CD8-positive, alpha-beta T cell (primary cell): ENCODE measurements at regions of chr2 and their contacts with region 1.

Region 1: DNA sequence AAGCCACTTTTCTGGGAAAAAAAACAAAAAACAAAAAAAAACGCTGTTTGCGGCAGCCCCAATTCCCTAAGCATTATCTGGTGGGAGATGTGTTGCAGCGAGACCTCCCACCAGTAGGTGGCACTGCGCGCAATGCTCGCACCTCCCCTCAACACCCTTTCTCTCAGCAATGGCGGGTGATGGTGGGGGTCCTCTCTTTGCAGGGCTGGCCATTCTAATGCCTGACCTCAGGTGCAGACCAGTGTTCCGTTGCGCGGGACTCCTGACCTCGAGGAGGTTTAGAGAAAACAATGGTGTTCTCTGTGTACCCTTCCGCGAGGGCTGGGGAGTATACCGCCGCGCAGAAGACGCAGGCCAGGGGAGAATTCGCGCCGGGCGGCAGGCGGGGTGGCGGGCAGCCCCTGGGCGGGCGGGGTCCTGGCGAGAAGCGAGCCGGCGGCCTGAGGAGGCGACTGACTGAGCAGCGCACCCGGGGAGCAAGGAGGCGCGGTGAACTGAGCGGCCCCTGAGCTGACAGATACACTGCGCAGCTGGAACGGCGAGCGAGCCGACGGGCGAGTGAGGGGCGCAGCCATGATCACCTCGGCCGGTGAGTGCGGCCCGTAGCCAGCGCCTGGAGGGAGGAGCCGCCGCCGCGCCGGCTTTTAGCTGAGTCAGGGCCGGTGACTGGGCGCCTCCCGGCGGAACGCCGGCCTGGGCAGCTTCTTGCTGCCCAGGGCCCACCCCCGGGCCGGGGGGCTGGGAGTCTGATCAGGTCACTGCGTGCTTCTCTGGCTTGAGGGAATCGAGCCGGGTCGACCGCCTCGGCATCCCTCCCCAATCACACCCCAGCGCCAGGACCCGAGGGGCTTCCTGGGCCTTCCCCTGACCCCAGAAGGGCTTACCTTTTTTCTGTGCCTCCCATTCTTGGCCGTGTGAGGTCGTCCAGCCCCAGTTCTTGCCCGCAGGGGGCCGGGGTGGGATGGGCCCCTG is at the start of gene PSMD1:
- DNase-seq: peak; percentile 90 to 97 (median 93)
- ATAC-seq: peak; percentile 85
- H3K4me3 ChIP-seq: peak within 1 kb of the TSS; percentile 83 to 87
- H3K4me3 Mint-ChIP-seq: peak within 1 kb of the TSS; percentile 99
- H3K27ac ChIP-seq: peak within 1 kb of the TSS; percentile 70 to 84
- H3K27ac Mint-ChIP-seq: peak within 1 kb of the TSS; percentile 100
- H3K4me1 ChIP-seq: peaks cover 29% of the 10 kb centered on the region
- H3K4me1 Mint-ChIP-seq: peaks cover 55% of the 10 kb centered on the region
- H3K27me3 ChIP-seq: no peaks in the 10 kb centered on the region
- H3K27me3 Mint-ChIP-seq: peaks cover 8% of the 10 kb centered on the region
- CTCF ChIP-seq: peak; percentile 93
- total RNA-seq, gene PSMD1: 31.0 to 33.9 TPM

Region 2: GRCh38 chr2:229927817-229928321 is 1128.9 kb before region 1 on chr2:
- CTCF ChIA-PET with region 1: no interaction called
- POLR2A ChIA-PET with region 1: no interaction called
- intact Hi-C with region 1: loop called (anchors 2 to 5 kb)
- DNase-seq: peak in 1 of 9 experiments; percentile 36
- ATAC-seq: peak; percentile 38
- H3K4me3 ChIP-seq: no peak overlapping the region
- H3K4me3 Mint-ChIP-seq: no peak overlapping the region
- H3K27ac ChIP-seq: no peak overlapping the region
- H3K27ac Mint-ChIP-seq: no peak overlapping the region
- H3K4me1 ChIP-seq: no peaks in the 10 kb centered on the region
- H3K4me1 Mint-ChIP-seq: peaks cover 27% of the 10 kb centered on the region
- H3K27me3 ChIP-seq: no peaks in the 10 kb centered on the region
- H3K27me3 Mint-ChIP-seq: no peaks in the 10 kb centered on the region
- CTCF ChIP-seq: no peak

Region 3: DNA sequence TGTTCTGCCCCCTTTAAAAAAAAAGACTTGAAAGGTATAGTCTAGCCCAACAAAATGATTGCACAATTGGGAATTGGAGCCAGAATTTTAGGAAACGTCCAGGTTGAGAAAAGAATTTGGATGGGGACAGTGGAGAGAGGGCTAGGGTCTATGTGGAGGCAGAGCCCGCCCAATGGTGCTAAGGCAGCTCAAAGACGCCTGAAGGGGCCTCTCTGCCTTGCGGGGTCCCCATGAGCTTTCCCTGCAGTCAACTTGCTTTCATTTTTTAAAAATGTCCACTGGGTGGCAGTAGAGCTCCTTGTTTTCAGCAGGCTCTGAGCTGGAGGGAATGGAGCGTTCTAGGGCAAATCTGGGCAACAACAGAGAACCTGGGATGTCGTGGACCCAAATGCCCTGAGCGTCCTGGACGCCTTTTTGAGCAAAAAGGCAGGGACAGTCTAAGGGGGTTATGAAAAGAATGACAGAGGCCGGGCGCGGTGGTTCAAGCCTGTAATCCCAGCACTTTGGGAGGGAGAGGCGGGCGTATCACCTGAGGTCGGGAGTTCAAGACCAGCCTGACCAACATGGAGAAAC is 232.2 kb before region 1 on chr2:
- CTCF ChIA-PET with region 1: interaction called, 9 read pairs
- POLR2A ChIA-PET with region 1: no interaction called
- intact Hi-C with region 1: loop called (anchors 1 kb)
- DNase-seq: peak; percentile 17 to 88 (median 55)
- ATAC-seq: peak; percentile 90
- H3K4me3 ChIP-seq: no peak overlapping the region
- H3K4me3 Mint-ChIP-seq: peak overlapping the region; percentile 64
- H3K27ac ChIP-seq: no peak overlapping the region
- H3K27ac Mint-ChIP-seq: no peak overlapping the region
- H3K4me1 ChIP-seq: peaks cover 5% of the 10 kb centered on the region
- H3K4me1 Mint-ChIP-seq: peaks cover 7% of the 10 kb centered on the region
- H3K27me3 ChIP-seq: peaks cover 11 to 12% of the 10 kb centered on the region in 2 experiments
- H3K27me3 Mint-ChIP-seq: peaks cover 29% of the 10 kb centered on the region
- CTCF ChIP-seq: peak; percentile 83

Region 4: DNA sequence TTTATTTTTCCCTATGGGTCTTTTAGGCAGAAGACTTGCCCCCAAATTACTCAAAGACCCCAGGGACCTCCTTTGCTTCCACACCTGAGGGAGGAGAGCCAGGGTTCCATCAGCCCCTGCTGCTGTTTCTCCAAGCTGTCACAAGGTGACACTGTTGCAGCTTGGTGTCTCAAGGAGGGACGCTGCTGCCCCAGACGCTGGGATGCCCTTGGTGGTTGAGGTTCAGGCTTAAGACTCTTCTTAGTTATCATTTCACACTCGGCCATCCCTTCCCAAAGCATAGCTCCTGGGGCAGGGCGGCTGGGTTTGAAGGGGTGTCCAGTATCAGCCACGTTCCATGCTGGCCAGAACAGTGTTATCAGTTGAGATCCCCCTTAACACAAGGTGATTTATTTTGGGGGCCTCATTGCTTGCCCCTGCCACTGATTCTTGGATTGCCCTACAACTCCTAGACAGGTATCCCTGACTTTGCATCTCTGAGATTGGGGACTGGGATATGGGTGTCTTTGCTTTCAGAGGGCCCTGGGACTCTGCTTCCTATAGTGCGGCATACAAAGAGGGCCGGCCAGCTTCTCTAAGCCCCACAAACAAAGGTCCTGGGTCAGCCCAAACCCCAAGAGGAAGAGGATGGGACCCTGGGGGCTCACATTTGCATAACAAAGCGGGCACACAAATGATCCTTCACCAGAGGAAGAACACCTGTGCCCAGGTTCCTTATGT is 154.4 kb before region 1 on chr2:
- CTCF ChIA-PET with region 1: interaction called, 4 read pairs
- POLR2A ChIA-PET with region 1: no interaction called
- intact Hi-C with region 1: loop called (anchors 1 to 2 kb)
- DNase-seq: peak in 7 of 9 experiments; percentile 40 to 78 (median 60)
- ATAC-seq: no peak
- H3K4me3 ChIP-seq: no peak overlapping the region
- H3K4me3 Mint-ChIP-seq: no peak overlapping the region
- H3K27ac ChIP-seq: no peak overlapping the region
- H3K27ac Mint-ChIP-seq: no peak overlapping the region
- H3K4me1 ChIP-seq: peaks cover 24% of the 10 kb centered on the region
- H3K4me1 Mint-ChIP-seq: peaks cover 34% of the 10 kb centered on the region
- H3K27me3 ChIP-seq: no peaks in the 10 kb centered on the region
- H3K27me3 Mint-ChIP-seq: no peaks in the 10 kb centered on the region
- CTCF ChIP-seq: peak; percentile 84

Region 5: GRCh38 chr2:231463698-231464575 is 407.2 kb after region 1 on chr2 and contains the start of gene NCL:
- CTCF ChIA-PET with region 1: interaction called, 4 read pairs
- POLR2A ChIA-PET with region 1: no interaction called
- intact Hi-C with region 1: loop called in 1 of 2 experiments (anchors 1 kb)
- DNase-seq: peak; percentile 71 to 94 (median 82)
- ATAC-seq: peak; percentile 62
- H3K4me3 ChIP-seq: peak within 1 kb of the TSS; percentile 97
- H3K4me3 Mint-ChIP-seq: peak within 1 kb of the TSS; percentile 96
- H3K27ac ChIP-seq: peak within 1 kb of the TSS; percentile 97 to 98
- H3K27ac Mint-ChIP-seq: peak within 1 kb of the TSS; percentile 100
- H3K4me1 ChIP-seq: peaks cover 36% of the 10 kb centered on the region
- H3K4me1 Mint-ChIP-seq: peaks cover 52% of the 10 kb centered on the region
- H3K27me3 ChIP-seq: no peaks in the 10 kb centered on the region
- H3K27me3 Mint-ChIP-seq: no peaks in the 10 kb centered on the region
- CTCF ChIP-seq: no peak
- total RNA-seq, gene NCL: 390 to 394 TPM

Region 6: GRCh38 chr2:231786177-231786916 is 729.6 kb after region 1 on chr2 and contains the start of gene COPS7B:
- CTCF ChIA-PET with region 1: no interaction called
- POLR2A ChIA-PET with region 1: no interaction called
- intact Hi-C with region 1: loop called in 1 of 2 experiments (anchors 2 kb)
- DNase-seq: peak; percentile 57 to 88 (median 81)
- ATAC-seq: peak; percentile 64
- H3K4me3 ChIP-seq: peak within 1 kb of the TSS; percentile 75 to 95
- H3K4me3 Mint-ChIP-seq: peak within 1 kb of the TSS; percentile 93
- H3K27ac ChIP-seq: peak within 1 kb of the TSS; percentile 59 to 73
- H3K27ac Mint-ChIP-seq: peak within 1 kb of the TSS; percentile 84
- H3K4me1 ChIP-seq: peaks cover 48% of the 10 kb centered on the region
- H3K4me1 Mint-ChIP-seq: peaks cover 76% of the 10 kb centered on the region
- H3K27me3 ChIP-seq: no peaks in the 10 kb centered on the region
- H3K27me3 Mint-ChIP-seq: no peaks in the 10 kb centered on the region
- CTCF ChIP-seq: peak; percentile 66
- total RNA-seq, gene COPS7B: 35.0 to 36.8 TPM

Region 7: DNA sequence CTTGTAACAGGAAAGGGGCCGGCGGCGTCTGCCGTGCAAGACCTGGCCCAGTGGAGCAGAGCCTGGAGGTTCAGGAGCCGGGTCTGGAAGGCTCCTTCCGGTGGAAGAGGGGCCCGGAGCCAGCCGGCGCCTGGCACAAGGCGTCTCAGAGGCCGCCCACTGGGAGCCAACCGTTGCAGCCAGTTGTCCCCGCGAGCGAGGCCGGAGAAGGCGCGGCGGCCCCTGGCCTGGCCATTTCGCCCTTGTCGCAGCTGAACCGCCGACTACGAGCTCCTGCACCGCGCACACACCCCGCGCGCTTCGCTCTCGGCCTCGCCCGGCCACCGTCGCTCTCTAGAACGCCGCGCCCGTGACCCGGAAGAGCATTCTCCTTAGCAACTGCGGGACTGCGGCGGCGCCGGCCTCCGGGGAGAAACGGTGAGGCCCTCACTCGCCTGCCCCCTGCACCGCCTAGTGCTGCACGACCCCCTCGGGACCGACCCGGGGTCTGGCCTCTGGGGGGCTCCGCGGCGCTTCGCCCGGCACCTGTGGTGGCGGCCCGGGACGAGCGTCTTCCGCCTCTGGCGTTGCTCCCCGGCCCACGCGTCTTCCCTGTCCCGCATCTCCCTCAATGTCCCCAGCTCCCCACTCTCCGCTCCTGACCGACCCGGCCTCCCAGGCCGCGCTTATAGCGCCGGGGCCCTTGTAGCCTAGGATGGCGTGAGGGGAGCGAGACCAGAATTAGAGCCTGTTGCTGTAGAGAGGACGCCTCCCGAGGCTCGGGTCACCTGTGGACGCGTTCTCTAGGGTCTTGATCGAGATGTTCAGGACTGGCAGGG is 904.8 kb after region 1 on chr2 and contains the start of gene DIS3L2:
- CTCF ChIA-PET with region 1: no interaction called
- POLR2A ChIA-PET with region 1: no interaction called
- intact Hi-C with region 1: loop called in 1 of 2 experiments (anchors 10 kb)
- DNase-seq: peak; percentile 60 to 89 (median 78)
- ATAC-seq: peak; percentile 94
- H3K4me3 ChIP-seq: peak within 1 kb of the TSS; percentile 78 to 80
- H3K4me3 Mint-ChIP-seq: peak within 1 kb of the TSS; percentile 95
- H3K27ac ChIP-seq: peak within 1 kb of the TSS; percentile 57 to 68
- H3K27ac Mint-ChIP-seq: peak within 1 kb of the TSS; percentile 92
- H3K4me1 ChIP-seq: peaks cover 20% of the 10 kb centered on the region
- H3K4me1 Mint-ChIP-seq: peaks cover 43% of the 10 kb centered on the region
- H3K27me3 ChIP-seq: no peaks in the 10 kb centered on the region
- H3K27me3 Mint-ChIP-seq: no peaks in the 10 kb centered on the region
- CTCF ChIP-seq: no peak
- total RNA-seq, gene DIS3L2: 46.9 to 56.5 TPM